Cardiac septum (tissue), 1 donor: ENCODE measurements at regions of chr22 and their contacts with region 1.

Region 1: GRCh38 chr22:18024276-18024947 is at the start of gene MICAL3:
- DNase-seq: no peak
- total RNA-seq, gene MICAL3: 126 TPM

Region 2: GRCh38 chr22:17912945-17913721 is 111.3 kb before region 1 on chr22:
- intact Hi-C with region 1: loop called (anchors 2 kb)
- DNase-seq: no peak

Region 3: GRCh38 chr22:17972385-17973181 is 51.8 kb before region 1 on chr22:
- intact Hi-C with region 1: no loop called
- DNase-seq: no peak

Region 4: DNA sequence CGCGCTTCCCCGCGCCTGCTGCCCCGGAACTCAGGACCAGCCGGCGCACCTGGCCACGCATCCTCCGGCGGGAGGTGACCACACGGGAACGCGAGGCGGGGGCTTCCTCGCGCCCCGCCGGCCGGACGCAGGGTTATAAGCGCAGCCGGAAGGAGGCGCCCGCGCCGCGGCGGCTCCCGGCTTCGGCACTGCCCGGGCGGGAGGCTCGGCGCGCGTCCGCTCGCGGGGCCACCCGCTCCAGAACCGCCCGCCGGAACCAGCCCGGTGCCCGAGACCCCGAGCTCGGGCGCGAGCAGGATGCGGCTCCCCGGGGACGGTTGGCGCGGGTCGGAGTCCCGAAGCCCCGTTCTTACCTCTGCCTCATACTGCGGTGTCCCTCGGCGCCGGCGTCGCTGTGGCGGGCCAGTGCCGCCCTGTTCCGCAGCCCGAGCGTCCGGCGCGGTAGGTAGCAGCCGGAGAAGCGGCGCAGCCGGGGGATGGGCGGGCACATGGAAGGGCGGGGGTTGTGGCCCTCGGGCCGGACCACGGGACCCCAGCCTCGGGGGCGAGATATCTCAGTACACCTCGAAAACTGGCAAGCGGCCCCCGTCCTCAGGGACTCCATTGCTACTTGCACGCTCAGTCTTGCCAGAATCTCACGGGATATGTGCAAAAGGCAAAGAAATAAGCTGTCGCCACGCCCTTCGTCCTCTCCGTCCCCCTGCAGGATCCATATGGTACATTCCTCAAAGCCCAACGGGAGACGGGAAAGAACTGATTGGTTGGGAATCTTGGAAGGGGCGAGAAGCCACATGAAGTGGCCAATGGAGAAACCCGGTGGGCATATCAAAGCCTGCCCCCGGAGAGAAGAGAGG is 23.1 kb before region 1 on chr22:
- intact Hi-C with region 1: loop called (anchors 1 kb)
- DNase-seq: peak; percentile 93